HEK293 (cell line): ENCODE measurements at regions of chr5 and their contacts with region 1.

Region 1: DNA sequence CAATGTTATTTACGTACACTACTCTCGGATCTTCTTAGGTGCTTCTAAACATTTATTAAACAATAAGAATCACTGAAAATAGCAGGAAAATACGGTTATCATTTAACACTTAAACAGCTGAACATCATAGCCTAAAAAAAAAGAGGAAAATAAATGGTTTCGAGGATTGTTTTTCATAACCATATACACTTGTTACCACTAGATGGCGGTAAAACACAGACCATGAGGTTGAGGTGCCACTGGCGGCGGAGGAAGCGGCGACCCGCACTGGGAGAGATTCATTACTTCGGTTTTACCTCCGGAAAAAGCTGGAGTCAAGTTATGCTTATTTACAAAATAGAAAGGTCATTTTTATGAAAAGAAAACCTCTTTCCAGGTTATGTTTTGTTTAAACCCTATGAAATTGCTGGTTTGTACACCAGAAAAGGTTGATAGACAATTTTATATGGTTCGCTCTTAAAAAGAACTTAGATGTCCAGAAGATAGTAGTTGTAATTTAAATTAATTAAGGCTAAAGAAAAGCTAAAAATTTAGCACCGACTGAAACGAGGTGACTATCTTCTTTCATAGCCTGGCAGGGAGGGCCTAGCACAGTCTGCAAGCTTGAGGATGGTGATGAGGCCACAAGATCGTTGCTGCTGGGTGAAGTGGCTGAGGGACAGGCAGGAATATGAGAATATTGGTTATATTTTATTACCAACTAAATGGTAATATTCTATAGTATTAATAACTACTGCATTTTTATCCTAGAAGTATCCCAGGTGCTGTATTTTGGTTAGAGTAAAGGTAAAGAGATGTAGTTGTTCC is 605.7 kb downstream of the RAB3C start:
- H3K4me3 ChIP-seq: no peak overlapping the region
- H3K27ac ChIP-seq: no peak overlapping the region
- H3K4me1 ChIP-seq: peaks cover 11% of the 10 kb centered on the region
- CTCF ChIP-seq: peak; percentile 68; the same call in 1 of the 2 replicates

Region 2: DNA sequence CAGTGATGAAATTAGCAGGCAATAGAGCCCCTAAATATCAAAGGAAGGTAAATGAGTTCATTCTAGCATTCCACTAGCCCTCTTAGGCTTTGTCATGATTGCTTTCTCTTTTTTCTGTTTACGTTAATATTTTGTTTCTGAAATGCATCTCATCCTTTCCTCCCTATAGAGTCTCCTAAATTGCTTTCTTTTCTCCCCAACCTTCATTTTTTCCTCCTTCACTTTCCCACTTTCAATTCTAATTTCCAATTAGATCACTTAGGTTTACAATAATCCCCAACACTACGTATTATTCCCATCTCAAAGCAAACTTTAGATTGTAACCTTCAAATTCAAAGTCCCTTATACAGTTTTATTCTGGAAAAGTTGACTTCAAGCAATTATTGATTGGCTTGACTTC is 46.5 kb before region 1 on chr5:
- CTCF ChIA-PET with region 1: no interaction called
- POLR2A ChIA-PET with region 1: no interaction called
- H3K4me3 ChIP-seq: no peak overlapping the region
- H3K27ac ChIP-seq: no peak overlapping the region
- H3K4me1 ChIP-seq: no peaks in the 10 kb centered on the region
- CTCF ChIP-seq: no peak

Region 3: DNA sequence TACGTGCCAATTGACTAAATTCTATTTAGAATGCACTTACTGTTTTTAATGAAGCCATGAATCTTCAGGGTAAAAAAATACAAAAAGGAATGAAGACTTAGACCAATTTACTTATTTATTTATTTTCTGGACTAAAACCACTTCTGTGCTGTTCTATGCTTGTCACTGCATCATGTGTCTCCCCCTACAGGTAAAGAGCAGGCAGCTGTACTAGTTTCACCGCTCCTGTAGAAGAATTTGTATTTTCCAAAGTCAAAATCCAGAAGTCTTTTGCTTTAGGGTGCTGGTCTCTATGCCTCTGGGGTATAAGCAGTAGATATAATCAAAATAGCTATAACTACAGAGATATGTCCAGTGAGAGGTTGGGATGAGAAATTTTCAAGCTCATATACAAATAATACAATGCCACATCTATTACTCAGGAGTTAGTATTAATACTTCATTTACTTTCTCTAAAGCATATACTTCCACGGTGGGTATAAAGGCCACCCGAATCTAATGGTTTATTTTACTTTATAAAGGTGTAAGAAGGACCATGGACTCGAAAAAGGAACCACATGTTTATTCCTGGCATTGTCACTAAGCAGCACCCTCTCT is 14.3 kb before region 1 on chr5:
- CTCF ChIA-PET with region 1: interaction called, 18 read pairs
- POLR2A ChIA-PET with region 1: no interaction called
- H3K4me3 ChIP-seq: no peak overlapping the region
- H3K27ac ChIP-seq: no peak overlapping the region
- H3K4me1 ChIP-seq: no peaks in the 10 kb centered on the region
- CTCF ChIP-seq: peak; percentile 54

Region 4: DNA sequence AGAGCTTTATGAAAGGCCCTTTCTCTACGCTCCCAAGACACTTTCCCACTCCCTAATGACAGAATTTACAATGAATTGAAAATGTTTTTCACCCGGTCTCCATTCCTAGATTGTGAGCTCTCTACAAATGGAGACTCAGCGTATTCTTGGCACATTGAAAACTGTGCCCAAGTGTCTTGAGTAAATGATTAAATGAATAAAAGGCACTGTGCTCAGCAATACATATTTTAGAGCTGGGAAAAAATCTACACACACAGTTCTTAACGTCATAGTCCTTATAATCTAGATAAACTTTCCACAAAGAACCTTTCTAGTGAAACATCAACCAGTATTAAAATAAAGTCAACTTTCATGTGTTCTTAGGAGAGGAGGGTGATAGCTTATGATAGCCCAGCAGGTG is 28.2 kb after region 1 on chr5:
- CTCF ChIA-PET with region 1: interaction called, 28 read pairs
- POLR2A ChIA-PET with region 1: no interaction called
- H3K4me3 ChIP-seq: no peak overlapping the region
- H3K27ac ChIP-seq: no peak overlapping the region
- H3K4me1 ChIP-seq: peaks cover 10% of the 10 kb centered on the region
- CTCF ChIP-seq: no peak

Region 5: GRCh38 chr5:59358005-59358861 is 169.6 kb after region 1 on chr5:
- CTCF ChIA-PET with region 1: interaction called, 22 read pairs
- POLR2A ChIA-PET with region 1: no interaction called
- H3K4me3 ChIP-seq: no peak overlapping the region
- H3K27ac ChIP-seq: peak overlapping the region; percentile 64
- H3K4me1 ChIP-seq: peaks cover 52% of the 10 kb centered on the region
- CTCF ChIP-seq: no peak

Region 6: GRCh38 chr5:59380350-59380951 is 191.8 kb after region 1 on chr5:
- CTCF ChIA-PET with region 1: interaction called, 116 read pairs
- POLR2A ChIA-PET with region 1: interaction called, 4 read pairs
- H3K4me3 ChIP-seq: no peak overlapping the region
- H3K27ac ChIP-seq: no peak overlapping the region
- H3K4me1 ChIP-seq: peaks cover 3% of the 10 kb centered on the region
- CTCF ChIP-seq: peak; percentile 25; the same call in 1 of the 2 replicates

Region 7: GRCh38 chr5:59506285-59506877 is 317.8 kb after region 1 on chr5:
- CTCF ChIA-PET with region 1: interaction called, 11 read pairs
- POLR2A ChIA-PET with region 1: no interaction called
- H3K4me3 ChIP-seq: no peak overlapping the region
- H3K27ac ChIP-seq: no peak overlapping the region
- H3K4me1 ChIP-seq: no peaks in the 10 kb centered on the region
- CTCF ChIP-seq: 0 out of 2 replicates have a peak, but pooled peaks have one; percentile 23

Region 8: GRCh38 chr5:59799668-59800346 is 611.2 kb after region 1 on chr5:
- CTCF ChIA-PET with region 1: interaction called, 17 read pairs
- POLR2A ChIA-PET with region 1: no interaction called
- H3K4me3 ChIP-seq: no peak overlapping the region
- H3K27ac ChIP-seq: no peak overlapping the region
- H3K4me1 ChIP-seq: peaks cover 15% of the 10 kb centered on the region
- CTCF ChIP-seq: peak; percentile 68

Region 9: DNA sequence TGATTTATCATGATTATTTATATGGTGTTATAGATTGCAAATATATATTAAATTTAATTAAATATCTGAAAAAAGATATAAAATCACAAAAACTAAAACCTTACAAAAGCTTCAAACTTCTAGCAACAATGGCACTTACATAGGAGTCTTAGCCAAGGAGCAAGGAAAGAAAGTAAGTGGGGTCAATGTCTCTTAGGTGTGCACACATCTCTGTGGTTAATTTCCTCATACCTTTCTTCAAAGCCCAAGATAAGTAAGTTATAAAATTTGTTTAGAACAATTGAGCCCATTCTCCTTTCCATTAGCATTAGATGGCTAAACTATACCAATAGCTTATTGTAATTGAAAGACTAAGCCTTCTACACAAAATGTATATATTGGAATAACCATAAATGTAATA is 866.5 kb after region 1 on chr5:
- CTCF ChIA-PET with region 1: no interaction called
- POLR2A ChIA-PET with region 1: no interaction called
- H3K4me3 ChIP-seq: no peak overlapping the region
- H3K27ac ChIP-seq: no peak overlapping the region
- H3K4me1 ChIP-seq: no peaks in the 10 kb centered on the region
- CTCF ChIP-seq: no peak